ENCODE measurements at regions of chr3 and their contacts with region 1.

Region 1: DNA sequence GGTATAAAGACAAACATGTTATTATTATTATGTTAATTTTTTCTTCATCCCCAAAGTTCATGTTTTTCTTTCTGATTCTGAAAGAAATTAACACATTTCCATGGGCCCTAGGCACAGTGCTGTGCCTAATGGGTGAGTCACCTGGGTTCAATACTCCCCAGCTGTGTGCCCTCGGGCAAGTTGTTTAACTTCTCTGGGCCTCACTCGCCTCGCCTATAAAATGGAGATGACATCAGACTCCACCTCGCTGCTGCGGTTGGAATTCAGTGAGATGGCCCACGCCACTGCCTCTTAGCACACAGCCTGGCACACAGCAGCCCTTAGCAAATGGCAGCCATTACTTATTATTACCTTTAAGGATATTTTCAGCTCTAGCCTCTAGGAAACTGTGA is 22.6 kb downstream of the DNASE1L3 start:
- DNase-seq: no peak
- ATAC-seq: no peak
- H3K4me3 Mint-ChIP-seq: no peak overlapping the region
- H3K27ac Mint-ChIP-seq: no peak overlapping the region
- H3K4me1 Mint-ChIP-seq: peaks cover 2% of the 10 kb centered on the region
- H3K27me3 Mint-ChIP-seq: no peaks in the 10 kb centered on the region

Region 2: DNA sequence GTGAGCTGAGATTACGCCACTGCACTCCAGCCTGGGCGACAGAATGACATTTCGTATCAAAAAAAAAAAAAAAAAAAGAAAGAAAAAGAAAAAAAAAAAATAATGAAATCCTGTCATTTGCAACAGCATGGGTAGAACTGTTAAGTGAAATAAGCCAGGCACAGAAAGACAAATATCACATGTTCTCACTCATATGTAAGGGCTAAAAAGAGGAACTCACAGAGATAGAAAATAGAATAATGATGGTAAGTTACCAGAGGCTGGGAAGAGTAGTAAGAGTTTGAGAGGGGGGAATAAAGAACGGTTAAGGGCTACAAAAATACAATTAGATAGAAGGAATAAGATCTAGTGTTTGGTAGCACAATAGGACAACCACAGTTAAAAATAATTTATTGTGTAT is 515.0 kb before region 1 on chr3:
- CTCF ChIA-PET with region 1: no interaction called
- POLR2A ChIA-PET with region 1: no interaction called
- DNase-seq: no peak
- ATAC-seq: no peak
- H3K4me3 Mint-ChIP-seq: no peak overlapping the region
- H3K27ac Mint-ChIP-seq: no peak overlapping the region
- H3K4me1 Mint-ChIP-seq: peaks cover 35% of the 10 kb centered on the region
- H3K27me3 Mint-ChIP-seq: no peaks in the 10 kb centered on the region

Region 3: DNA sequence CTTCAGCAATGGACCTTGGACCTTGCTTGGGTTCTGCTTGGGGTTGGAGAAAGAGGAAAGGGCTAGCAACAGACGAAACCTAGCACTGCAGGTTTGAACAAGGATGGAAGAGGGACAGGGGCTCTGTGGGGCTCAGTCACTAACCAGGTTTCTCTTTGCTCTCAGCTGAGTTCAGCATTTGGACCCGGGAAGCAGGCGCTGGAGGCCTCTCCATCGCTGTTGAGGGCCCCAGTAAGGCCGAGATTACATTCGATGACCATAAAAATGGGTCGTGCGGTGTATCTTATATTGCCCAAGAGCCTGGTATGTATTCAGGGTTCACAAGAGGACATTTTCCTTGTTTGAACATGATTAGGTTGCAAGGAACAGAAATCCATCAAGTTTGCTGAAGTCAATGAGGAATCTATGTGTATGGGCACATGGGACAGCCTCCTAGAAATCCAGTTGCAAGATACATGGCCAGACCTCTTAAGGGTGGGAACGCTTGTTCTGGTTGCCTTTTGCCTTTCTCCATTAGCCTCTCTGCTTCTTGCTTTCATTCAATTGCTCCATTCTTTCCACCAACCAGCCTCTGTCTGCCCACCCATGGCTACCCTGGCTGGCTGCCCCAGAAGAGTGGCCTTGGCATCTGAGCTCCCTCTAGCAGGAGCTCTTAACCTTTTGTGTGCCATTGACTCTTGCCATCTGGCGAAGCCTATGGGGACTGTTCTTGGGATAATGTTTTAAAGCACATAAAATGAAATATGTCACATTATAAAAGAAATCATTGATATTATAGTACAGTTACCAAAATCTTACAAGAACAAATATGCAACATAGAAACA is 33.3 kb before region 1 on chr3:
- CTCF ChIA-PET with region 1: no interaction called
- POLR2A ChIA-PET with region 1: no interaction called
- DNase-seq: no peak
- ATAC-seq: no peak
- H3K4me3 Mint-ChIP-seq: no peak overlapping the region
- H3K27ac Mint-ChIP-seq: no peak overlapping the region
- H3K4me1 Mint-ChIP-seq: no peaks in the 10 kb centered on the region
- H3K27me3 Mint-ChIP-seq: no peaks in the 10 kb centered on the region

Region 4: GRCh38 chr3:58167431-58168351 is 20.5 kb before region 1 on chr3:
- CTCF ChIA-PET with region 1: interaction called, 15 read pairs
- POLR2A ChIA-PET with region 1: no interaction called
- DNase-seq: peak; percentile 75
- ATAC-seq: peak; percentile 78
- H3K4me3 Mint-ChIP-seq: no peak overlapping the region
- H3K27ac Mint-ChIP-seq: no peak overlapping the region
- H3K4me1 Mint-ChIP-seq: no peaks in the 10 kb centered on the region
- H3K27me3 Mint-ChIP-seq: no peaks in the 10 kb centered on the region

Region 5: DNA sequence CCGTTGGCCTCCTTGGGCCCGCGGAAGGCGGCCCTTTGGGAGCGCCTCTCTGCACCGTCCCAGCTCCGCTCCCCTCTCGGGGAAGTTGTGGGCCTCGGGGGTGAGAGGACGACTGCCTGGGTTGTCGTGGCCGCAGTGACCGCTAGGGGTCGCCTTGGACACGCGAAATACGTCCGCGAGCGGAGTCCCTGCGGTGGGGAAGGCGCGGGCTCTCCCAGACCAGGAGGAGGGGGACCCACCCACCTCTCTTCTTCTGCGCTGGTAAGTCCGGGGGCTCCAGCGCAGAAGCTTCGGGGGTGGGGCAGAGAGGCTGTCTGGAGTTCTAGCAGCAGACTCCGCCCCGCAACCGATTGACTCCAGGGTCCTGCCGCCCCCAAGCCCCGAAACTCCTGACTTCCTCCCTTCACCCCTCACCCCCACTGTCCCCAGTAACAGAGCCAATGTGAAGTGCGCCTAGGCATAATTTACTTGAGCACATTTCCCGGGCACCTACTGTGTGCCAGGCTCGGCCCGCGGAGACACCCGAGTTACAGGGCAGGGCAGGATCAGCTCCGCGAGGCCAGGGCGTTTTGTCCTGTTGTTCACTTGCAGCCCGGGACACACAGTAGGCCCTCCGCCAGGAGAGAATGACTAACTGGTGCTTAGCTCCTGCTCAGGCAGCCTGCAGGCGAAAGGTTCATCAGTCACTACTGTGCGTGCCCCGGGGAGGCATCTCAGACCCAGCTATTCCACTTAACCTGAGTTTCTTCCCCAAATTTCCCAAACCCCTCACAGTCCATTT is 10.2 kb before region 1 on chr3:
- CTCF ChIA-PET with region 1: interaction called, 19 read pairs
- POLR2A ChIA-PET with region 1: no interaction called
- DNase-seq: peak; percentile 91
- ATAC-seq: peak; percentile 98
- H3K4me3 Mint-ChIP-seq: peak overlapping the region; percentile 60
- H3K27ac Mint-ChIP-seq: no peak overlapping the region
- H3K4me1 Mint-ChIP-seq: peaks cover 20% of the 10 kb centered on the region
- H3K27me3 Mint-ChIP-seq: peaks cover 2% of the 10 kb centered on the region

Region 6: GRCh38 chr3:58206406-58207011 is 18.3 kb after region 1 on chr3:
- CTCF ChIA-PET with region 1: interaction called, 170 read pairs
- POLR2A ChIA-PET with region 1: no interaction called
- DNase-seq: peak; percentile 32
- ATAC-seq: peak; percentile 61
- H3K4me3 Mint-ChIP-seq: no peak overlapping the region
- H3K27ac Mint-ChIP-seq: no peak overlapping the region
- H3K4me1 Mint-ChIP-seq: peaks cover 8% of the 10 kb centered on the region
- H3K27me3 Mint-ChIP-seq: peaks cover 12% of the 10 kb centered on the region

Region 7: DNA sequence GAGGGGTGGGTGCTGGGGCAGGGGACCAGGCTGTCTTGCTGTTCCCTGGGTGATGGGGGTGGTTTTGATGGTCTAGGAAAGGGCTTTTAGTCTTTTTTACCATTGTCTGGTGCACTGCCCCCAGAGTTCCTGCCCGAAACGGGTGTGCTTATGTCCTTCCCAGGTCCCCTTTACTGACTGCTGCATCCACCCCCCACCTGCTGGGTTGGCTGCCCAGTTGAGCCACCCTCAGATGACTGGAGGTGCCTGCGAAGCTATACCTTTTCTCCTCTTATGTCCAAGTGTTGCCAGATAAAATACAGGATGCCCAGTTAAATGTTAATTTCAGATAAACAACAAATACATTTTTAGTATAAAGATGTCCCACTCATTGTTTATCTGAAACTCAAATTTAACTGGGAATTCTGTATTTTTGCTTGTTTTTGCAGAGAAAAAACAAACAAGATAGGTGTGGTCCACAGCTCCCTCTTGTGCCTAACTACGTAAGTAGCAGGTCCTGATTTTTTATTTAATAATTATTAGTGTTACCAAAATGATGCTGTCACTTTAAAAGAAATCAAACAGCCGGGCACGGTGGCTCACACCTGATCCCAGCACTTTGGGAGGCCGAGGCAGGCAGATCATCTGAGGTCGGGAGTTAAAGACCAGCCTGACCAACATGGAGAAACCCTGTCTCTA is 111.8 kb after region 1 on chr3:
- CTCF ChIA-PET with region 1: interaction called, 55 read pairs
- POLR2A ChIA-PET with region 1: no interaction called
- DNase-seq: no peak
- ATAC-seq: no peak
- H3K4me3 Mint-ChIP-seq: no peak overlapping the region
- H3K27ac Mint-ChIP-seq: no peak overlapping the region
- H3K4me1 Mint-ChIP-seq: no peaks in the 10 kb centered on the region
- H3K27me3 Mint-ChIP-seq: peaks cover 14% of the 10 kb centered on the region

Measured in activated CD8-positive, alpha-beta T cell treated with anti-CD3 and anti-CD28 coated beads, Interleukin-2, amount 10 ng/mL, durations not matched to agents 7 days and 5 days (primary cell).